ENCODE measurements at regions of chr18 and their contacts with region 1.

Region 1: DNA sequence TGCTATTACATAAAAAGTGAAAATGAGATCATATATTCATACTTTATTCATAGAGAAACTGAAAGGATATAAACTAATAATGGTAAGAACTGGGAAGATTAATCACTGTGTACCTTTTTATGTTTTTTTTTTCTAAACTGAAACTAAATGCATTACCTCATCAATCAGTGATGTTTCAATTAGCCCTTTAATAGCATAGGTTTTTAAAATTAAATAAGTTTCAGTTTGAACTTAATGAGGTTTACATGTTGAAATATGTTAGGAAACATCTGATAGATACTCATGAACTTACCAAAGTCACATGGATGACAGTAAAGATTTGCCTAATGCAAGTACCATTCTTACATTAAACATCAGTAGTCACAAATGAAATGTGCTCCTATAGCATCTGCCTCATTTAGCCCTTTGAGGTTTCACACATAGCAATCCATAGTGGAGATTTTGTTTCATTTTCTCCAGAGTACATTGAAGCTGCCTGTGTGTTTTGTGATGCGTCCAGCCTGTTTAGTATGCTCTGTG is 8.9 kb downstream of the MAPRE2 start:
- DNase-seq: peak in 2 of 9 experiments; percentile 27 to 50
- ATAC-seq: peak; percentile 47
- H3K4me3 ChIP-seq: no peak overlapping the region
- H3K4me3 Mint-ChIP-seq: peak overlapping the region; percentile 63
- H3K27ac ChIP-seq: peak overlapping the region in 1 of 2 experiments; percentile 52
- H3K27ac Mint-ChIP-seq: peak overlapping the region; percentile 81
- H3K4me1 ChIP-seq: peaks cover 56% of the 10 kb centered on the region
- H3K4me1 Mint-ChIP-seq: peaks cover 85% of the 10 kb centered on the region
- H3K27me3 ChIP-seq: no peaks in the 10 kb centered on the region
- H3K27me3 Mint-ChIP-seq: no peaks in the 10 kb centered on the region
- CTCF ChIP-seq: no peak

Region 2: GRCh38 chr18:34767601-34768027 is 282.5 kb before region 1 on chr18:
- CTCF ChIA-PET with region 1: no interaction called
- POLR2A ChIA-PET with region 1: no interaction called
- intact Hi-C with region 1: no loop called
- DNase-seq: no peak
- ATAC-seq: no peak
- H3K4me3 ChIP-seq: no peak overlapping the region
- H3K4me3 Mint-ChIP-seq: no peak overlapping the region
- H3K27ac ChIP-seq: no peak overlapping the region
- H3K27ac Mint-ChIP-seq: no peak overlapping the region
- H3K4me1 ChIP-seq: no peaks in the 10 kb centered on the region
- H3K4me1 Mint-ChIP-seq: no peaks in the 10 kb centered on the region
- H3K27me3 ChIP-seq: no peaks in the 10 kb centered on the region
- H3K27me3 Mint-ChIP-seq: peaks cover 14% of the 10 kb centered on the region
- CTCF ChIP-seq: no peak

Region 3: GRCh38 chr18:35060122-35060815 is 10.2 kb after region 1 on chr18:
- CTCF ChIA-PET with region 1: no interaction called
- POLR2A ChIA-PET with region 1: no interaction called
- intact Hi-C with region 1: loop called (anchors 1 to 2 kb)
- DNase-seq: no peak
- ATAC-seq: no peak
- H3K4me3 ChIP-seq: no peak overlapping the region
- H3K4me3 Mint-ChIP-seq: no peak overlapping the region
- H3K27ac ChIP-seq: no peak overlapping the region
- H3K27ac Mint-ChIP-seq: no peak overlapping the region
- H3K4me1 ChIP-seq: peaks cover 13% of the 10 kb centered on the region
- H3K4me1 Mint-ChIP-seq: peaks cover 71% of the 10 kb centered on the region
- H3K27me3 ChIP-seq: no peaks in the 10 kb centered on the region
- H3K27me3 Mint-ChIP-seq: no peaks in the 10 kb centered on the region
- CTCF ChIP-seq: no peak

Region 4: GRCh38 chr18:35158728-35159450 is 108.8 kb after region 1 on chr18:
- CTCF ChIA-PET with region 1: no interaction called
- POLR2A ChIA-PET with region 1: no interaction called
- intact Hi-C with region 1: no loop called
- DNase-seq: peak in 2 of 9 experiments; percentile 32 to 51
- ATAC-seq: peak; percentile 59
- H3K4me3 ChIP-seq: no peak overlapping the region
- H3K4me3 Mint-ChIP-seq: no peak overlapping the region
- H3K27ac ChIP-seq: peak overlapping the region in 1 of 2 experiments; percentile 55
- H3K27ac Mint-ChIP-seq: peak overlapping the region; percentile 60
- H3K4me1 ChIP-seq: peaks cover 16% of the 10 kb centered on the region
- H3K4me1 Mint-ChIP-seq: peaks cover 21% of the 10 kb centered on the region
- H3K27me3 ChIP-seq: no peaks in the 10 kb centered on the region
- H3K27me3 Mint-ChIP-seq: peaks cover 2% of the 10 kb centered on the region
- CTCF ChIP-seq: no peak

Measured in CD8-positive, alpha-beta T cell (primary cell).